ENCODE measurements at regions of chr9 and their contacts with region 1.

Region 1: DNA sequence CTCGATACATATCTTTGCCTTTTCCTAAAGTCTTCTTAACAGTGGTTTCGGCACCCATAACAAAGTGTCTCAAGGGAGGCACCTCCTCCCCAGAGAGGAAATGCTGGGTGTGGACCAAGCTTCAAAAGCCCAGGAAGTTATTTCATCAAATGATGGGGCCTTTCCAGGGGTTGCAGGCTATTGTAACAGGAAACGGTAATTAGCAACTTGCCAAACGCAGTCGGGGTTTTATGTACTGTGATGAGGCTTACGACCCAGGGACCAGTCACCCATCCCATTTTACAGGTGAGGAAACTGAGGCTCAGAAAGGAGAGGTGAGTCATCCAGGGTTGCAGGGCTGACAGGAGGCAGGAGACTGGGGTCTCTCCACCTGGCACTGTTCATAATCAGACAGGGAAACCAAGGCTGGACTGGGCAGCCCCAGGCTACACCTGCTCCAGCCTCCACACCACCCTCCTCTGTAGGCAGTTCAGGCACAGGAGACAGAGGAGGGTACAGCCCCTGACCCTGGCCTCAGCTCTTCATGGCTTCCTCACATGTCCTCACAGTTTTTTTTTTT is 30.0 kb upstream of the SUSD3 start:
- DNase-seq: no peak
- ATAC-seq: peak; percentile 84
- H3K4me3 Mint-ChIP-seq: peak overlapping the region; percentile 74
- H3K27ac Mint-ChIP-seq: peak overlapping the region; percentile 90
- H3K4me1 Mint-ChIP-seq: peaks cover 48% of the 10 kb centered on the region
- H3K27me3 Mint-ChIP-seq: no peaks in the 10 kb centered on the region

Region 2: DNA sequence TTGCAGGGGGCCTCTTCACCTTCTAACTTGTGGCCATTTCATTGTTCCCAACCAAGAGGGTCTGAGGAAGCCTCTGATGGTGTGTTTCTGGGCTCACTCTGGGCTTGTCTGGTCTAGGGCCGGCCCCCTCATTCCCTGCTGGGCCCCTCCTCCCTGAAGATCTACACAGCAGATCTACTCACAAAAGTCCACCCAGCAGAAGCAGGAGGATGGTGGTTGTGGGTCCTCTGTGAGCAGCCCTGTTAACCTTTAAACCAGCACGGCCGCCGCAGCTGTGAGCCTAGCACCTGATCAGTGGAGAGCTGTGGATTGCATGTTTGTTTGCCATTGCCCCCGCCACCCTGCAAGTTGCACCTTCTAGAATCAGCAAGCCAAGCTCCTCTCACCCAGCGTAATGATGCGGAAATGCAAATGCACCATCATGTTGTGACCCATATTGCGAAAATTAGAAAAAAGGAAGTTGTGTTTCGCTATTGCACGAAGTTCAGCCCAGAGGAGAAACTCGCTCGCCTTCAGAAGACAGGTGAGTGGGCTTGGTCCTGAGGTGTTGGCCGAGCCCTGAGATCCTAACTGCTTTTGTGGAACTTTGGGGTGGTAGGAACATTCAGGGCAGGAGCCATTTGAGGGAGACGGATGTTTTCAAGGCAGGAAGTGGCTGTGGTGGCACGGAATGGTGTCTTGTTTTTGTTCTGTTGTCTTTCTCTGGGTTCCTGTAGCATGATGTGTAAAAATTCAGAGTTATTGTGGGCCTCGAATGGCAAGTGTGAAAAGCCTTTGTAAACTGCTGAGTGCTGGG is 64.5 kb before region 1 on chr9:
- POLR2A ChIA-PET with region 1: interaction called, 11 read pairs
- DNase-seq: peak; percentile 79
- ATAC-seq: peak; percentile 63
- H3K4me3 Mint-ChIP-seq: peak overlapping the region; percentile 92
- H3K27ac Mint-ChIP-seq: peak overlapping the region; percentile 99
- H3K4me1 Mint-ChIP-seq: peaks cover 47% of the 10 kb centered on the region
- H3K27me3 Mint-ChIP-seq: no peaks in the 10 kb centered on the region

Region 3: GRCh38 chr9:93041108-93041802 is 12.7 kb after region 1 on chr9:
- POLR2A ChIA-PET with region 1: interaction called, 13 read pairs
- DNase-seq: no peak
- ATAC-seq: no peak
- H3K4me3 Mint-ChIP-seq: no peak overlapping the region
- H3K27ac Mint-ChIP-seq: peak overlapping the region; percentile 39
- H3K4me1 Mint-ChIP-seq: peaks cover 29% of the 10 kb centered on the region
- H3K27me3 Mint-ChIP-seq: peaks cover 2% of the 10 kb centered on the region

Region 4: DNA sequence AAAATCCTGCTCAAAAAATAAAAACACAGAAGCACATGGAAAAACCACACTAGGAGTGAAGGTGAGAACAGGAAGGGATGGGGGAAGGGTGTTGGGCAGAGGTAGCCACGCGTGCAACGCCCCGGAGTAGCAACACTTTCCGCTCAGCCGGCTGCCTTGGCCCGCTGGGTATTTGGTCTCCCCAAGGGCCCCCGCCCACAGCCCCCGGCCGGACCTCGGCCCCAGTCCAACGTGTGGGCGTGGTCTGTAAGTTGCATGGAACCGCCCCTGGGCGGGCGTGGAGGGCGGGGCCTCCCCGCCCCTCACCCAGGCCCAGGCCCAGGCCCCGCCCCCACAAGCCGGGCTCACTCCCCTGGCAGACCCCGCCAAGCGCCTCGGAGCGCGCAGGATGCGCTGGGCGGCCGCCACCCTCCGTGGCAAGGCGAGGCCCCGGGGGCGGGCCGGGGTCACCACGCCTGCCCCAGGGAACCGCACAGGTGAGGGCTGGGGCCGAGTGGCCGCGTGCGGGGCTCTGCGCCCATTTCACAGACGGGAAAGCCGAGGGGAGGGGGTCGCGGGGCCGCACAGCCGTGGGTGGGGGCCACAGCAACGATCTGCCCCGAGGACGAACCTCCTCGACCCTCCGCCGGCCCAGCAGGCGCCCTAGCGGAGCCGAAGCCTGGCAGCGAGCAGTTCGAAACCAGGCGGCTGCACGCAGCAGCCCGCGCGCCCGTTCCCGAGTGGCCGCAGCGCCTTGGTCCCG is 30.0 kb after region 1 on chr9 and contains the start of gene SUSD3:
- POLR2A ChIA-PET with region 1: interaction called, 25 read pairs
- DNase-seq: peak; percentile 79
- ATAC-seq: peak; percentile 56
- H3K4me3 Mint-ChIP-seq: peak within 1 kb of the TSS; percentile 95
- H3K27ac Mint-ChIP-seq: peak within 1 kb of the TSS; percentile 93
- H3K4me1 Mint-ChIP-seq: peaks cover 42% of the 10 kb centered on the region
- H3K27me3 Mint-ChIP-seq: no peaks in the 10 kb centered on the region
- total RNA-seq, gene SUSD3: 68.0 to 70.4 TPM

Region 5: GRCh38 chr9:93173365-93174051 is 145.0 kb after region 1 on chr9:
- POLR2A ChIA-PET with region 1: no interaction called
- DNase-seq: no peak
- ATAC-seq: no peak
- H3K4me3 Mint-ChIP-seq: no peak overlapping the region
- H3K27ac Mint-ChIP-seq: peak overlapping the region; percentile 41
- H3K4me1 Mint-ChIP-seq: no peaks in the 10 kb centered on the region
- H3K27me3 Mint-ChIP-seq: peaks cover 16% of the 10 kb centered on the region

Region 6: GRCh38 chr9:93357649-93358048 is 329.1 kb after region 1 on chr9:
- POLR2A ChIA-PET with region 1: no interaction called
- DNase-seq: peak; percentile 34
- ATAC-seq: peak; percentile 100
- H3K4me3 Mint-ChIP-seq: peak overlapping the region; percentile 37
- H3K27ac Mint-ChIP-seq: peak overlapping the region; percentile 85
- H3K4me1 Mint-ChIP-seq: peaks cover 14% of the 10 kb centered on the region
- H3K27me3 Mint-ChIP-seq: peaks cover 3% of the 10 kb centered on the region

Measured in activated naive CD8-positive, alpha-beta T cell treated with anti-CD3 and anti-CD28 coated beads, Interleukin-2, amount 10 ng/mL, durations not matched to agents 7 days and 5 days (primary cell).